GM10248 (cell line): ENCODE measurements at regions of chr17 and their contacts with region 1.

Region 1: GRCh38 chr17:51200295-51200694 is 34.1 kb downstream of the NME2 start:
- DNase-seq: no peak
- CTCF ChIP-seq: no peak

Region 2: GRCh38 chr17:50956750-50957523 is 243.4 kb before region 1 on chr17:
- CTCF ChIA-PET with region 1: no interaction called
- POLR2A ChIA-PET with region 1: no interaction called
- DNase-seq: peak; percentile 74
- CTCF ChIP-seq: peak; percentile 82

Region 3: DNA sequence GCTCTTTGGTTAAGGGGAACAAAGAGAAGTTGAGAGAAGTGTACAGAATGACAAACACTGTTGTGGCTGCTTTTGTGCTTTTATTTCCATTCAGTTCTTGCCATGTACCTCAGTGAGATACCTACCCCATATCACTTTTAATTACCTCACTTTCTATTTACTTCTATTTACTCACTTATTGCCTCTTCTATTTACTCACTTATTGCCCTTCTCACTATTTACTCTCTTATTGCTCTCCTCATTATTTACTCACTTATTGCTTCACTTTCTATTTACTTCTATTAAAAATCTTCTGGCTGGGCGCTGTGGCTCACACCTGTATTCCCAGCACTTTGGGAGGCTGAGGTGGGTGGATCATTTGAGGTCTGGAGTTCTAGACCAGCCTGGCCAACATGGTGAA is 17.7 kb after region 1 on chr17:
- CTCF ChIA-PET with region 1: no interaction called
- POLR2A ChIA-PET with region 1: no interaction called
- DNase-seq: no peak
- CTCF ChIP-seq: no peak

Region 4: GRCh38 chr17:51230306-51230705 is 30.0 kb after region 1 on chr17:
- CTCF ChIA-PET with region 1: no interaction called
- POLR2A ChIA-PET with region 1: interaction called, 12 read pairs
- DNase-seq: no peak
- CTCF ChIP-seq: no peak